ENCODE measurements at regions of chr15 and their contacts with region 1.

Region 1: DNA sequence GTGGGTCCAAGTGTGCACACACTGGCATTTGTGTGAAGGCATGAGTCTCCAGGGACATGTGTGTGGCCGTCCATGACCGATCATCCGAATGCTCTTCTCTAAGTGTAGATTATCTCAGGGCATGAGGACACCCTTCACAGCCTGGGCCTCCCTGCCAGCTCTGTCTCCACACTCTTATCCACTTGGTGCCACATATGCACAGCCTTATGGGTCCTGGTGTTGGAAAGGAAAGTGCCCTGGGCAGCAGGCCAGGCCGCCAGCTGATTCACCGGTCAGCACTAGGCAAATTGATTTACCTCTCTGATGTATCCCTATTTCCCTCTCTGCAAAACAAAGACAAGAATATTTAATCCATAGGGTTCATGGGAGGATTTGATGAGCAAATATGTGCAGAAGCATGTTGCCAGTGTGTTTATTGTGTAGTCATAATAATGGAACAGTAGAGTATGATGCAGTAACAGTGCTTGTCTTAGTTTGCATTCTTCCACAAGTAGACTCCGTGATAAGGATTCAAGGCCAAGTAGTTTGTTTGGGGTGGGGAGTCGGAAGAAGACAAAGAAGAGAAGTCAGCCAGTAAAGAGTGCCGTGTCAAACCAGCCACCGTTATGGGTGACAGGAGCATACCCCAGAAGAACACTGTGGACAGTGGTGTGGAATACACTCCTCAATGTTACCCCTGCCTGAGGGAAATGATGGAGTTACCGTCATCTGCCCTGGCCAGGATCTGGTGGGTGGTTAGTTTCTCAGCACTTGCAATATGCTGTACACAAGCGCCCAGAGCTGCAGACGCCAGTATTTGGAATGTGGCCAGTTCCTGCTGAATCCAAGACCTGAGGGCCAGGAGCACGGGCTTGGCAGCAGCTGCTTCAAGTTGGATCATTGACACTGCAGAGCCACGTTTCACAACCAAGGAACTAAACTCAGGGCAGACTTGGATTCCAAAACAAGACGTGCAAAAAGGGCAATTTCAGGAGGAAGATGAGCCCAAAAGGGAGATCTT is 85.1 kb downstream of the MTHFS start:
- DNase-seq: no peak
- ATAC-seq: no peak
- H3K4me3 ChIP-seq: no peak overlapping the region
- H3K27ac ChIP-seq: no peak overlapping the region
- H3K4me1 ChIP-seq: no peaks in the 10 kb centered on the region
- H3K27me3 ChIP-seq: no peaks in the 10 kb centered on the region
- CTCF ChIP-seq: no peak

Region 2: GRCh38 chr15:79596051-79596507 is 215.6 kb before region 1 on chr15:
- CTCF ChIA-PET with region 1: no interaction called
- POLR2A ChIA-PET with region 1: no interaction called
- intact Hi-C with region 1: no loop called
- DNase-seq: peak; percentile 94
- ATAC-seq: peak; percentile 90
- H3K4me3 ChIP-seq: no peak overlapping the region
- H3K27ac ChIP-seq: no peak overlapping the region
- H3K4me1 ChIP-seq: no peaks in the 10 kb centered on the region
- H3K27me3 ChIP-seq: peaks cover 17% of the 10 kb centered on the region
- CTCF ChIP-seq: peak; percentile 97

Region 3: DNA sequence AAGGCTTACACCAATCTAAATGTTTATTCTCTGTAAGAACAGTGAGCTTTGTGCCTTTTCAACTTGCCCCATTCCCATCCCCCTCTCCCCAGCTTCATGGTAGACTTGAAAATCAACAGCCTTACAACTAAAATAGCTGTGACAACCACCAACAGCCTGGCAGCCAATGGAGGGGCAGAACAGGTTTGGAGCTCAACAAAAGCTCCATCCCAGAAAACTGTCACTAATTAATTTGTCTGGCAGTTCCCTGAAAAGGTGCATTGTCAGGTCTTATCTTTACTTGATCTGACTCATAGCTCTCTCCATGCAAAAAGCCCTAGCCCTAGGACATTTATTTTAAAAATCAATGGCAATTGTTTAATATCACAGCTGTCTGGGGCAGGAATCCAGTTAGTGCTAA is 62.5 kb after region 1 on chr15:
- CTCF ChIA-PET with region 1: no interaction called
- POLR2A ChIA-PET with region 1: interaction called, 10 read pairs
- intact Hi-C with region 1: no loop called
- DNase-seq: peak; percentile 71
- ATAC-seq: peak; percentile 90
- H3K4me3 ChIP-seq: no peak overlapping the region
- H3K27ac ChIP-seq: peak overlapping the region; percentile 63
- H3K4me1 ChIP-seq: peaks cover 9% of the 10 kb centered on the region
- H3K27me3 ChIP-seq: no peaks in the 10 kb centered on the region
- CTCF ChIP-seq: no peak